Naive thymus-derived CD4-positive, alpha-beta T cell (primary cell): ENCODE measurements at regions of chr15 and their contacts with region 1.

Region 1: DNA sequence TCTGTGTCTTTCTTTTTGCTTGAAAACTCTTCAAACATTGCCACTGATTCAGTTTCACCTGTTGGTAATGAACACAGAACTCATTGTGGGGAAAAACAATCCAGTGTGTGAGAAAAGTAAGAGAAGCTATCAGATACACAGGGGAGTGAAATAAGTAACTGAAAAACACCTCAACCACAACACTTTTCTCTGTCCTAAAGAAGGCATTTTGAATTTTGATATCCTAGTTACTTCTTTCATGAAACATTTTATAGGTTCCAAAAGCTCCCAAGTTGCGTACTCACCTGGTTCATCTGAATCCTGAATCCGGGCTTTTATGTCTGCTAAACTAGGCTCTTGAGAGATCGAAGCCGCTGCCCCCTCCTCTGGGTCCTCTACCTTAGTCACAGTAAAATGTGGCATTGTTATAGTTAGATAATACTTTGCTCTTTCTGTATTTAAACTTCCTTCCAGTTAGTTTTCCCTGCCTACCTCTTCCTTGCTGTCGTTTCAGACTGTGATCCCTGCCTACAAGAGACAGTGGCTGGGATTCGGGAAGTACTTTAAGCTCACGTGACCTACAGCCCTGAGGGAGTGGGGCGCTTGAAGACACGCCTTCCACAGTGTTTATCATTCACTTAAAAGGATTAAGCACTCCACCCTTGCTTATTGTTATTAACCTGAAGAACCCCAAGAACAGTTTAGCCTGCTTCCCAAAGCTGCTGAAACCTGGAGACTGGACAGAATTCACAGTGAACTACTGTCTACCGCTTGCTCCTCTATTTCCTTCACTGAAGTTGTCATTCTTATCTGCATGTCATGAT is 19.1 kb downstream of the SLC12A6 start:
- DNase-seq: peak in 4 of 9 donors; percentile 29 to 38 (median 36)
- ATAC-seq: peak; percentile 83
- H3K4me3 ChIP-seq: peak overlapping the region; percentile 71
- H3K4me3 Mint-ChIP-seq: peak overlapping the region; percentile 92 to 99 (median 97)
- H3K27ac ChIP-seq: peak overlapping the region; percentile 76
- H3K27ac Mint-ChIP-seq: peak overlapping the region; percentile 91 to 99 (median 95)
- H3K4me1 ChIP-seq: peaks cover 0 to 24% of the 10 kb centered on the region in 2 donors
- H3K4me1 Mint-ChIP-seq: peaks cover 36 to 85% (median 62%) of the 10 kb centered on the region in 7 donors
- H3K27me3 ChIP-seq: no peaks in the 10 kb centered on the region
- H3K27me3 Mint-ChIP-seq: no peaks in the 10 kb centered on the region

Region 2: GRCh38 chr15:34284937-34285336 is 33.5 kb before region 1 on chr15:
- CTCF ChIA-PET with region 1: no interaction called
- POLR2A ChIA-PET with region 1: no interaction called
- intact Hi-C with region 1: loop called (anchors 5 kb)
- DNase-seq: no peak
- ATAC-seq: no peak
- H3K4me3 ChIP-seq: no peak overlapping the region
- H3K4me3 Mint-ChIP-seq: peak overlapping the region in 6 of 10 donors; percentile 1 to 51 (median 30)
- H3K27ac ChIP-seq: peak overlapping the region; percentile 30
- H3K27ac Mint-ChIP-seq: peak overlapping the region; percentile 16 to 90 (median 65)
- H3K4me1 ChIP-seq: no peaks in the 10 kb centered on the region
- H3K4me1 Mint-ChIP-seq: peaks cover 10 to 69% (median 47%) of the 10 kb centered on the region in 7 donors
- H3K27me3 ChIP-seq: no peaks in the 10 kb centered on the region
- H3K27me3 Mint-ChIP-seq: no peaks in the 10 kb centered on the region

Region 3: DNA sequence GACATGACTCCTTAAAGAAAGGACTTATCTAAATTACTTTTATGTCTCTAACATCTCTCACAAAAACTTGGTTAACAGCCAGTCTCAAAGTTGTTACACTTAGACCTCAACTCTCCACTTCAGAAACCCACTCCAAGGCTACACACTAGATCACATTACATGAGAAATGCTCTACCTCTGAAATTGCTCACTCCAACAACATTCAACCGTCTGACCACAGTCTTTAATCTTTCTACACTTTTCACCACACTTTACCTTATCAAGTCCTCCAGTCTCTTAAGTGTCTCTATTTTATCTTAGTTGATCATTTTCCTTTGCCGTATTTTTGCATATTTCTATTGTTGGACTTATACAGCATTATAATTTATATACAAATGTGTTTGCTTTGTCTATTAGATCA is 13.3 kb after region 1 on chr15:
- CTCF ChIA-PET with region 1: interaction called, 15 read pairs
- POLR2A ChIA-PET with region 1: interaction called, 151 read pairs
- intact Hi-C with region 1: loop called (anchors 1 kb)
- DNase-seq: peak in 2 of 9 donors; percentile 30 to 40
- ATAC-seq: peak; percentile 72
- H3K4me3 ChIP-seq: no peak overlapping the region
- H3K4me3 Mint-ChIP-seq: peak overlapping the region; percentile 17 to 99 (median 60)
- H3K27ac ChIP-seq: peak overlapping the region; percentile 92
- H3K27ac Mint-ChIP-seq: peak overlapping the region; percentile 77 to 98 (median 85)
- H3K4me1 ChIP-seq: peaks cover 47 to 64% of the 10 kb centered on the region in 2 donors
- H3K4me1 Mint-ChIP-seq: peaks cover 47 to 98% (median 82%) of the 10 kb centered on the region in 7 donors
- H3K27me3 ChIP-seq: no peaks in the 10 kb centered on the region
- H3K27me3 Mint-ChIP-seq: no peaks in the 10 kb centered on the region